Activated CD8-positive, alpha-beta T cell treated with anti-CD3 and anti-CD28 coated beads for 36 hours (primary cell): ENCODE measurements at regions of chr17 and their contacts with region 1.

Region 1: DNA sequence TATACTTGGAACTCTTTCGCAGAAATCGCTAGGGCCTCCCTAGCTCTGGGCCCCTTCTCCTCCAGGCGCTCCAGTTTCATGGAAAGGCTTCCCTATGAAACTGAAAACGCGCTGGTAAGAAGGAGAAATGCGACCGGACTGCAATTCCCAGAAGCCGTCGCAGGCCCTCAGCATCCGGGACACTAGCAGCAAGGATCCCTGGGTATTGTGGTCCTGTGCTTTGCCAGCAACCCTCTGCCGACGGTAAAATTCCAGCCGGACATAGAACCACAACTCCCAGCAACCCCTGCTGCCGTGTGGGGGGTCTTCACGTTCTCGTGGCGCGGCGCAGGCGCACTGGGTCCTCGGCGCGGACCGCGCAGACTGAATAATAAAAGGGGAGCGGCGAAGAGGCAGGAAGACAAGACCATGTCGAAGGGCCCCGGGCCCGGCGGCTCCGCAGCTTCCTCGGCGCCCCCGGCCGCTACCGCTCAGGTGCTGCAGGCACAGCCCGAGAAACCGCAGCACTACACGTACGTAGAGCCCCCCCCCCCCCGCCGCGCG is at the start of gene UNK:
- DNase-seq: peak; percentile 98
- ATAC-seq: peak; percentile 71
- H3K4me3 Mint-ChIP-seq: peak within 1 kb of the TSS; percentile 93
- H3K27ac Mint-ChIP-seq: peak within 1 kb of the TSS; percentile 100
- H3K4me1 Mint-ChIP-seq: peaks cover 35% of the 10 kb centered on the region
- H3K27me3 Mint-ChIP-seq: peaks cover 2% of the 10 kb centered on the region
- CTCF ChIP-seq: no peak
- total RNA-seq, gene UNK: 26.4 to 26.6 TPM

Region 2: DNA sequence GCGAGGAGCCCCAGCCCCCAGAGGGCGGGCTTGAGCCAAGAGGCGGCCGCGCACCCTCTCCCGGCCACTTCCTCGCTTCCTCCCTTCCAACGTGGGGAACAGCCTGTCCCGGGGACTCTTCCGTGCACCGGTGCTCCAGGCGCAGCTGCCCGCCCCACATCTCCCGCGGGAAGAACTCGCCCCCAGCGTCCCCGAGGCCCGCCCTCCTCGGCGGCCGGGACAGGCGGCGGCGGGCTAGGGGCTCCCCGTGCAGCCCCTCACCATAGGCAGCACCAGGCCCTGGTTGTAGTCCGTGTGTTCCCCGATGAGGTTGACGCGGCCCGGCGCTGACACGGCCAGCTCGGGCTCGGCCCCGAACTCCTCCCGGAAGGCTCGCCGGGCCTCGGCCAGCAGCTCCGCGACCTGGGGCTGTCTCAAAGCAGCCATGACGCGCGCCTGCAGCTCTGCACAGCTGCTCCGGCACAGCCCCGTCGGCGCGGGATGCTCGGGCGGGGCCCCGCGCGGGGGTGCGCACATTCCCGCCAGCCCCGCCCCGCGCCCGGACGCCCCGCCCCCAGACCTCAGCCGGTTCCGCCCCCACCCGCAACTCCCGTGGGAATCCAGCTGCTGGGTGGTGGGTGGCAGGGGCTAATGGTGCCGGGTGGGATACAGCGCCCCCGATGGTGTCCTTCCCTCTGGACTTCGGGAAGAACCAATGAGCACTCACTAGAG is 19.7 kb before region 1 on chr17 and contains the start of gene GALK1:
- CTCF ChIA-PET with region 1: interaction called, 40 read pairs
- POLR2A ChIA-PET with region 1: interaction called, 16 read pairs
- intact Hi-C with region 1: no loop called
- DNase-seq: peak; percentile 81
- ATAC-seq: peak; percentile 96
- H3K4me3 Mint-ChIP-seq: peak within 1 kb of the TSS; percentile 79
- H3K27ac Mint-ChIP-seq: peak within 1 kb of the TSS; percentile 78
- H3K4me1 Mint-ChIP-seq: peaks cover 10% of the 10 kb centered on the region
- H3K27me3 Mint-ChIP-seq: no peaks in the 10 kb centered on the region
- CTCF ChIP-seq: peak; percentile 78
- total RNA-seq, gene GALK1: 43.4 to 50.7 TPM

Region 3: GRCh38 chr17:75795820-75796607 is 11.5 kb after region 1 on chr17:
- CTCF ChIA-PET with region 1: interaction called, 6 read pairs
- POLR2A ChIA-PET with region 1: interaction called, 26 read pairs
- intact Hi-C with region 1: no loop called
- DNase-seq: no peak
- ATAC-seq: no peak
- H3K4me3 Mint-ChIP-seq: no peak overlapping the region
- H3K27ac Mint-ChIP-seq: no peak overlapping the region
- H3K4me1 Mint-ChIP-seq: peaks cover 17% of the 10 kb centered on the region
- H3K27me3 Mint-ChIP-seq: no peaks in the 10 kb centered on the region
- CTCF ChIP-seq: no peak

Region 4: DNA sequence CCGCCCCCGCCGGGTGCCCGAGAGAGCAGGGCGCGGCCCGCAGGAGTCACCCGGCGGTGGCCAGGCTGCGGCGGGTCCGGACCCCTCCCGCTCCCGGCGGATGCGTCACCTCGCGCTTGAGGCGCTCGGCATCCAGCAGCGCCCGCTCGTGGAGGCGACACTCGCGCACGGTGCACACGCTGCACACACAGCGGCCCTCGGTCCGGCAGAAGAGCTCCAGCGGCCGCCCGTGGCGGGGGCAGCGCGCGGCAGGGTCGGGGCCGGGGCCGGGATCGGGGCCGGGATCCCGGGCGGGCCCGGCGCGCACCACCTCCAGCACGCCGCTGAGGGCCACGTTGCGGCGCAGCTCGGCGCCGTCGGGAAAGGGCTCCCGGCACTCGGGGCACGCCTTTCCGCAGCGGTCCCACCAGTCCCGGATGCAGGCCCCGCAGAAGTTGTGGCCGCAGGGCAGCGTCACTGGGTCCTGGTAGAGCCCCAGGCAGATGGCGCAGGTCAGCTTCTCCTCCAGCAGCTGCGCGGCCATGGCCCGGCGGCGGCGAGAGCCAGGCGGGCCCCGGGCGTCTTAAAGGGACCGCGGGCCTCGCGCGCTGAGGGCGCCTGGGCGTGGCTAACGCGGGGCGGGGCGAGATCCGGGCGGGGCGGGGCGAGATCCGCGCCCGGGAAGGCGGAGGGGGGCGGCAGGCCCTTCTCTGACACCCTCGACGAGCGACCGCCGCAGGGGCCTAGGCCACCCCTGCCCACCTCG is 112.0 kb after region 1 on chr17 and contains the start of gene TRIM65:
- CTCF ChIA-PET with region 1: no interaction called
- POLR2A ChIA-PET with region 1: interaction called, 11 read pairs
- intact Hi-C with region 1: no loop called
- DNase-seq: peak; percentile 85
- ATAC-seq: peak; percentile 88
- H3K4me3 Mint-ChIP-seq: peak within 1 kb of the TSS; percentile 87
- H3K27ac Mint-ChIP-seq: peak within 1 kb of the TSS; percentile 88
- H3K4me1 Mint-ChIP-seq: peaks cover 21% of the 10 kb centered on the region
- H3K27me3 Mint-ChIP-seq: no peaks in the 10 kb centered on the region
- CTCF ChIP-seq: peak; percentile 17
- total RNA-seq, gene TRIM65: 37.1 to 42.2 TPM

Region 5: DNA sequence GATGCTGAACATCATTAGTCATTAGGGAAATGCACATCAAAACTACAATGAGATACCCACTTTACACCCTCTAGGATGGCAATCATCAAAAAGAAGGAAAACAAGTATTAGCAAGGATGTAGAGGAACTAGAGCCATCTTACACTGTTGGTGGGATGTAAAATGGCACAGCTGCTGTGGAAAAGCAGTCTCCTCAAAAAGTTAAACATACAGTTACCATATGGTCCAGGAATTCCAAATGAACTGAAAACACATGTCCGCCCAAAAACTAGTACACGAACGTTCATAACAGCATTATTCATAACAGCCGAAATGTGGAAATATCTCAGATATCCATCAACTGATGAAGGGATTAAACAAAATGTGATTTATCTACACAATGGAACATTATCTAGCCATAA is 149.3 kb after region 1 on chr17:
- CTCF ChIA-PET with region 1: no interaction called
- POLR2A ChIA-PET with region 1: no interaction called
- intact Hi-C with region 1: no loop called
- DNase-seq: no peak
- ATAC-seq: no peak
- H3K4me3 Mint-ChIP-seq: no peak overlapping the region
- H3K27ac Mint-ChIP-seq: no peak overlapping the region
- H3K4me1 Mint-ChIP-seq: no peaks in the 10 kb centered on the region
- H3K27me3 Mint-ChIP-seq: no peaks in the 10 kb centered on the region
- CTCF ChIP-seq: no peak